Caco-2 (cell line): ENCODE measurements at regions of chr4 and their contacts with region 1.

Region 1: DNA sequence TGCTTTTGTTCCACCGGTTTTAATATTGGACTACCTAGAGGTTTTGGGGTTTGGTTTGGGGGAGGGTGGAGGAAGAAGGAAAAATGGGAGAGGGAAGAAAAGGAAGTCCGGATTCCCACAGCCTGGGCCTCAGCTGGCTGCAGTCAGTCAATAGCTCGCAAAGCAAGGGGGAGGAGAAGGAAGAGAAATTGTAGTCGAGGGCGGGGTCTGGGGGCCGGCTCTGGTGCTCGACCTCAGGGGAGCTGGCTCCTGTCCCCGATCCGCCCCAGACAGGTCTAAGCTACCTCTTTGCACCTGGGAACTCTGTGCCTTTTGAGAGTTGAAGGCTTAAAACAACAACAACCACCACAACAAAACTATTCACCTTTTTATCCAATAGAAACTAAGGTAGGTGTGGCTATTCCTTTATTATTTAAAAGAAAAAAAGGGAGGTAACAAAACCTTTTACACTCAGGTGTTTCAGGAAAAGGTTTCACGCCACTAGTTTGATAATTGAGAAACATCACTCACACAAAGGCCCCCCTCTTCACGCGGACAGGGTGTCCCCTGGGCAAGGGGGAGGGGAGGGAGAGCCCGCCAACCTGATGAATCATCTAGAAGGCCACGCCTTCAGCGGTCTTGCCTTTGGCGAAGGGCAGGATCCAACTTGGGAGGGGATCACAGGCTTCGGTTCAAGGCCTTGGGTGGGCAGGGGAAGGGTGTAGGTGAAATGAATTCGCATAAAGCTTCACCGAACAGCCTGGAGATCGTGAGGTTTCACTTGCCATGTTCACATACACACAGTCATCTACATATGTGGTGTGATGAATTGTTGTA is 1.6 kb upstream of the LNX1 start:
- DNase-seq: peak; percentile 73 to 82
- H3K4me3 ChIP-seq: peak overlapping the region; percentile 35
- H3K4me3 Mint-ChIP-seq: peak overlapping the region; percentile 82
- H3K27ac Mint-ChIP-seq: peak overlapping the region; percentile 87
- H3K4me1 ChIP-seq: peaks cover 33% of the 10 kb centered on the region
- H3K4me1 Mint-ChIP-seq: peaks cover 32% of the 10 kb centered on the region
- H3K27me3 ChIP-seq: no peaks in the 10 kb centered on the region
- H3K27me3 Mint-ChIP-seq: no peaks in the 10 kb centered on the region
- CTCF ChIP-seq: no peak

Region 2: GRCh38 chr4:53313510-53313909 is 279.4 kb before region 1 on chr4:
- CTCF ChIA-PET with region 1: no interaction called
- POLR2A ChIA-PET with region 1: no interaction called
- intact Hi-C with region 1: loop called (anchors 10 kb)
- DNase-seq: peak; percentile 38 to 48
- H3K4me3 ChIP-seq: no peak overlapping the region
- H3K4me3 Mint-ChIP-seq: no peak overlapping the region
- H3K27ac Mint-ChIP-seq: no peak overlapping the region
- H3K4me1 ChIP-seq: no peaks in the 10 kb centered on the region
- H3K4me1 Mint-ChIP-seq: peaks cover 13% of the 10 kb centered on the region
- H3K27me3 ChIP-seq: no peaks in the 10 kb centered on the region
- H3K27me3 Mint-ChIP-seq: no peaks in the 10 kb centered on the region
- CTCF ChIP-seq: peak in 1 of 2 experiments; percentile 54

Region 3: DNA sequence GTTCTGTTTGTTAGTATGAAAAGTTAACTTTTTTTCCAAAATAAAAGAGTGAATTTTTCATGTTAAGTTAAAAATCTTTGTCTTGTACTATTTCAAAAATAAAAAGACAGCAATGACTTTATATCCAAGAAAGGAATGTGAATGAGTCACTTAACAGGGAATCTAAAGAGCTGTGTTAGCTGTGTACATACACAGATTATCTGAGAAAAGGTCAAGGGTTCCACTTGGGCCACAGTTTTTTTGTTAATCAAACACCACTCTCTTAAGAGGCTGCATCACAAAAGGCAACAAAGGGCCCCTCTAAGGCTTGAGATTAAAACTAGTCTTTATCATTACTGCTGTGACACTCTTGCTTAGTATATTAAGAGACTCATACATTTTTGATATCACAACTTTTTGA is 133.3 kb before region 1 on chr4:
- CTCF ChIA-PET with region 1: no interaction called
- POLR2A ChIA-PET with region 1: no interaction called
- intact Hi-C with region 1: loop called (anchors 2 kb)
- DNase-seq: peak; percentile 59 to 60
- H3K4me3 ChIP-seq: no peak overlapping the region
- H3K4me3 Mint-ChIP-seq: peak overlapping the region; percentile 34
- H3K27ac Mint-ChIP-seq: peak overlapping the region; percentile 75
- H3K4me1 ChIP-seq: peaks cover 50% of the 10 kb centered on the region
- H3K4me1 Mint-ChIP-seq: peaks cover 20% of the 10 kb centered on the region
- H3K27me3 ChIP-seq: no peaks in the 10 kb centered on the region
- H3K27me3 Mint-ChIP-seq: no peaks in the 10 kb centered on the region
- CTCF ChIP-seq: no peak

Region 4: GRCh38 chr4:53490965-53491622 is 101.8 kb before region 1 on chr4:
- CTCF ChIA-PET with region 1: no interaction called
- POLR2A ChIA-PET with region 1: no interaction called
- intact Hi-C with region 1: loop called (anchors 1 kb)
- DNase-seq: peak; percentile 49
- H3K4me3 ChIP-seq: no peak overlapping the region
- H3K4me3 Mint-ChIP-seq: no peak overlapping the region
- H3K27ac Mint-ChIP-seq: no peak overlapping the region
- H3K4me1 ChIP-seq: no peaks in the 10 kb centered on the region
- H3K4me1 Mint-ChIP-seq: no peaks in the 10 kb centered on the region
- H3K27me3 ChIP-seq: no peaks in the 10 kb centered on the region
- H3K27me3 Mint-ChIP-seq: no peaks in the 10 kb centered on the region
- CTCF ChIP-seq: peak; percentile 53 to 71

Region 5: DNA sequence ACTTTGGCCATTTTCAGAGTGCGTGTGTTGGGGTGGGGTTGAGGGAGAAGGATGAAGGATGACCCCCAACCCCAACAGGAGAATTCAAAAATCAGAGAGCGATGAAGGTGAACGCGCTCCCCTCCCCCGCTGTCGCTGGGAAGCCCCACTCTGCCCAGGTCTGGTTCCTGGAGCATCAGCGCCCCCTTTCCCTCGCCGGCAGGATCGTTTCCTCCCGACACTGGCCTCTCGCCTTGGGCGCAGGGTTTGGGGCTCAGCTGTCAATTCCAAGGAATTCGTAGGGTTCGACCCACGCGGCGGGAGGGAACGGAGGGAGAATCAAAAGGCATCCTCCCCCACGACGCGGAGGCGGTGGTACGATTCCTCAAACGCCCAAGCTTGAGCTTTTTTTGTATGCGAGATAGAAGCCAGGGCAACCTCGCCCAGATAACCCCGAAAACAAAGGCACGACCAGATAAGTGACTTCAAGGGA is 635.2 kb after region 1 on chr4:
- CTCF ChIA-PET with region 1: interaction called, 3 read pairs
- POLR2A ChIA-PET with region 1: no interaction called
- intact Hi-C with region 1: loop called (anchors 2 kb)
- DNase-seq: peak; percentile 85 to 90
- H3K4me3 ChIP-seq: peak overlapping the region; percentile 64
- H3K4me3 Mint-ChIP-seq: peak overlapping the region; percentile 87
- H3K27ac Mint-ChIP-seq: peak overlapping the region; percentile 79
- H3K4me1 ChIP-seq: peaks cover 9% of the 10 kb centered on the region; the same call in 1 of the 2 replicates
- H3K4me1 Mint-ChIP-seq: peaks cover 13% of the 10 kb centered on the region
- H3K27me3 ChIP-seq: no peaks in the 10 kb centered on the region
- H3K27me3 Mint-ChIP-seq: no peaks in the 10 kb centered on the region
- CTCF ChIP-seq: peak; percentile 87 to 89